ENCODE measurements at regions of chr14 and their contacts with region 1.

Region 1: GRCh38 chr14:58258156-58258555 is 13.5 kb downstream of the PSMA3 start:
- DNase-seq: no peak
- ATAC-seq: no peak
- H3K4me3 ChIP-seq: no peak overlapping the region
- H3K4me3 Mint-ChIP-seq: no peak overlapping the region
- H3K27ac ChIP-seq: no peak overlapping the region
- H3K27ac Mint-ChIP-seq: no peak overlapping the region
- H3K4me1 ChIP-seq: no peaks in the 10 kb centered on the region
- H3K4me1 Mint-ChIP-seq: peaks cover 5 to 18% (median 16%) of the 10 kb centered on the region in 3 donors
- H3K27me3 ChIP-seq: no peaks in the 10 kb centered on the region
- H3K27me3 Mint-ChIP-seq: no peaks in the 10 kb centered on the region

Region 2: DNA sequence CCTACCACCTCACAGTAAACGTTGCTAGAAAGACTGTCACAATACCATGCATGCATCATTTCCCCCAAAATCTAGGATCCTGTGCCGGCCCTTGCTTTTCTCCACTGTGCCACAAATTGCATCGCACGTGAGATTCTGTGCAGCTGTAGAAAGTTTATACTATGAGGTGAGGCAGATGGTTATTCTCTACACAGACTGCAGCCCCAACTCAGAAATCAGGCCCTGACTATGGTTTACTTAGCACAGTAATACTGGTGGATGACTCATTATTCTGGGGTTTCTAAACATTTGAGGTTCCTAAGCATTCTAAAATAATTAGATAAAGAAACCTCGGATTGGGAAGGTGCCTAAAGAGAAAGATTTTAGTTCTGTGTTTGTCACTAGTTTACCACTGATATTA is 600.7 kb before region 1 on chr14:
- CTCF ChIA-PET with region 1: no interaction called
- POLR2A ChIA-PET with region 1: no interaction called
- DNase-seq: no peak
- ATAC-seq: no peak
- H3K4me3 ChIP-seq: no peak overlapping the region
- H3K4me3 Mint-ChIP-seq: no peak overlapping the region
- H3K27ac ChIP-seq: no peak overlapping the region
- H3K27ac Mint-ChIP-seq: no peak overlapping the region
- H3K4me1 ChIP-seq: no peaks in the 10 kb centered on the region
- H3K4me1 Mint-ChIP-seq: no peaks in the 10 kb centered on the region
- H3K27me3 ChIP-seq: no peaks in the 10 kb centered on the region
- H3K27me3 Mint-ChIP-seq: no peaks in the 10 kb centered on the region

Region 3: DNA sequence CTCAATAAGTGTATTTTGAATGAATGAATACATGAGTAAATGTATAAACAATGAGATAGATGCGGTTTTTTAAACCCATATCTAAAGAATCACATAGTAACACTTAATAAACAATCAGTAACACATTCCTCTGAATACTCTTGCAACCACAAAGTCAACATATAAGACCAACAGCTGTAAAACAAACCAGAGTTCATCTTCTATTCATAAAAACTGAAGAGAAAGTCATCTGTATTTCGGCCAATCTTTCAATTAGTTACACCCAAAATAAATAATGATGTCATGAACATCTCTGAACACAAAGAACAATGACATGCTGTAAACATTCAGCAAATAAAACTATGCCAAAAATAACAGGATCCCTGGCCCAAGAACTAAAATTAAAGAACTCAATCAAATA is 153.3 kb before region 1 on chr14:
- CTCF ChIA-PET with region 1: no interaction called
- POLR2A ChIA-PET with region 1: no interaction called
- DNase-seq: no peak
- ATAC-seq: no peak
- H3K4me3 ChIP-seq: no peak overlapping the region
- H3K4me3 Mint-ChIP-seq: no peak overlapping the region
- H3K27ac ChIP-seq: no peak overlapping the region
- H3K27ac Mint-ChIP-seq: no peak overlapping the region
- H3K4me1 ChIP-seq: no peaks in the 10 kb centered on the region
- H3K4me1 Mint-ChIP-seq: no peaks in the 10 kb centered on the region
- H3K27me3 ChIP-seq: no peaks in the 10 kb centered on the region
- H3K27me3 Mint-ChIP-seq: peaks cover 4 to 16% of the 10 kb centered on the region in 2 donors

Region 4: GRCh38 chr14:58171090-58171489 is 87.1 kb before region 1 on chr14:
- CTCF ChIA-PET with region 1: no interaction called
- POLR2A ChIA-PET with region 1: no interaction called
- DNase-seq: peak in 7 of 35 experiments; percentile 4 to 38 (median 7)
- ATAC-seq: peak in 3 of 4 experiments; percentile 32 to 55 (median 36)
- H3K4me3 ChIP-seq: no peak overlapping the region
- H3K4me3 Mint-ChIP-seq: no peak overlapping the region
- H3K27ac ChIP-seq: no peak overlapping the region
- H3K27ac Mint-ChIP-seq: no peak overlapping the region
- H3K4me1 ChIP-seq: peaks cover 0 to 7% of the 10 kb centered on the region in 2 experiments
- H3K4me1 Mint-ChIP-seq: peaks cover 0 to 4% (median 2%) of the 10 kb centered on the region in 3 donors
- H3K27me3 ChIP-seq: peaks cover 4 to 13% of the 10 kb centered on the region in 2 experiments
- H3K27me3 Mint-ChIP-seq: peaks cover 29 to 39% of the 10 kb centered on the region in 2 donors

Region 5: GRCh38 chr14:58244556-58245387 is 13.4 kb before region 1 on chr14 and contains the start of gene PSMA3:
- CTCF ChIA-PET with region 1: interaction called, 3 read pairs
- POLR2A ChIA-PET with region 1: interaction called, 6 to 11 read pairs
- DNase-seq: peak; percentile 93 to 99 (median 98)
- ATAC-seq: peak; percentile 92 to 95 (median 92)
- H3K4me3 ChIP-seq: peak within 1 kb of the TSS; percentile 83 to 88
- H3K4me3 Mint-ChIP-seq: peak within 1 kb of the TSS; percentile 98 to 99 (median 99)
- H3K27ac ChIP-seq: peak within 1 kb of the TSS; percentile 94
- H3K27ac Mint-ChIP-seq: peak within 1 kb of the TSS; percentile 99
- H3K4me1 ChIP-seq: peaks cover 18% of the 10 kb centered on the region in 2 experiments
- H3K4me1 Mint-ChIP-seq: peaks cover 45 to 51% (median 49%) of the 10 kb centered on the region in 3 donors
- H3K27me3 ChIP-seq: no peaks in the 10 kb centered on the region
- H3K27me3 Mint-ChIP-seq: no peaks in the 10 kb centered on the region
- total RNA-seq, gene PSMA3: 75.5 to 139 (median 99.7) TPM